ENCODE measurements at regions of chr13 and their contacts with region 1.

Region 1: DNA sequence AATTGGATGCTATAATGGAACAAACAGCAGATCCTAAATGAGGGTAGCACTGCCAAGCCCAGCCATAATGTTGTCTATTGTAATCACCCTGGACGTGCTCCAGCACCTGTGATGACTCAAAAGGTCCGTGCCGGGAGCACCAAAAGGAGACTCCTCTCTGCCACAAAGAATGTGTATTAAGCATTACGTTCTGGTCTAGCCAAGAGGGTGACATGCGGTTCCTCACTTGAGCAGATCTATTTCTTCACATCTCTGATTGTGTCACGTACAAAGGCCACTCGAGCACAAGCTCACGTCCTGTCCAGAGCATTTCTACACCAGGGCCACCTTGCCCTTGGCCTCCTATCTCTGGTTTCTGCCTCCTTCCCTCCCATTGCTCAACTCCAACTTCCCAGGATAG is 219.9 kb upstream of the IRS2 start:
- DNase-seq: peak; percentile 93
- H3K4me3 ChIP-seq: no peak overlapping the region
- H3K27ac ChIP-seq: peak overlapping the region; percentile 93
- H3K4me1 ChIP-seq: peaks cover 51% of the 10 kb centered on the region
- H3K27me3 ChIP-seq: no peaks in the 10 kb centered on the region
- CTCF ChIP-seq: no peak

Region 2: GRCh38 chr13:109275852-109276251 is 730.5 kb before region 1 on chr13:
- CTCF ChIA-PET with region 1: no interaction called
- dilution Hi-C with region 1: no loop called
- in situ Hi-C with region 1: no loop called
- intact Hi-C with region 1: loop called (anchors 10 kb)
- DNase-seq: peak; percentile 40
- H3K4me3 ChIP-seq: no peak overlapping the region
- H3K27ac ChIP-seq: no peak overlapping the region
- H3K4me1 ChIP-seq: peaks cover 26% of the 10 kb centered on the region
- H3K27me3 ChIP-seq: no peaks in the 10 kb centered on the region
- CTCF ChIP-seq: peak; percentile 39 to 52

Region 3: GRCh38 chr13:109945206-109945960 is 60.9 kb before region 1 on chr13:
- CTCF ChIA-PET with region 1: no interaction called
- dilution Hi-C with region 1: no loop called
- in situ Hi-C with region 1: no loop called
- intact Hi-C with region 1: loop called (anchors 5 kb)
- DNase-seq: peak; percentile 96
- H3K4me3 ChIP-seq: no peak overlapping the region
- H3K27ac ChIP-seq: peak overlapping the region; percentile 74
- H3K4me1 ChIP-seq: peaks cover 11% of the 10 kb centered on the region
- H3K27me3 ChIP-seq: no peaks in the 10 kb centered on the region
- CTCF ChIP-seq: no peak

Region 4: DNA sequence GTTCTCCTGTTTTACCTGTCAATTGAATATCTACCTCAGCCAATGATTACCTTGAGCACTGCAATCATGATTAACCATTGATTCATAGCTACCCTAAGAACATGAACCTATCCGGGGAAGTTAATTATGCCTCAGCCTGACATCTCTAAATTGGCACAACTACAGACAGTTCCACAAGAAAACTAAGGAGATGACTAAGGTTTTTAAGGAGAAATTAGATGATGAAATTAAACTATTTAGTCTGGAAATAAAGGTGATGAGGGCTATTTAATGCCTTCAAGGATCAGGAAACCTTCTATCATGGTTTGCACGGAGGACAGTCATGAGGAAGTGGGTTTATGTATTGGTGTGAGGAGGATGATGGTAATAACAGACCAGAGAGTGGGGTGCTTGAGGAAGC is 97.2 kb after region 1 on chr13:
- CTCF ChIA-PET with region 1: no interaction called
- dilution Hi-C with region 1: loop called (anchors 5 kb)
- in situ Hi-C with region 1: no loop called
- intact Hi-C with region 1: loop called (anchors 1 kb)
- DNase-seq: peak; percentile 81
- H3K4me3 ChIP-seq: no peak overlapping the region
- H3K27ac ChIP-seq: peak overlapping the region; percentile 52
- H3K4me1 ChIP-seq: peaks cover 13% of the 10 kb centered on the region
- H3K27me3 ChIP-seq: no peaks in the 10 kb centered on the region
- CTCF ChIP-seq: no peak